Endothelial cell of umbilical vein (primary cell): ENCODE measurements at regions of chr3 and their contacts with region 1.

Region 1: GRCh38 chr3:141575879-141576743 is 89.3 kb downstream of the RASA2 start:
- DNase-seq: peak; percentile 43
- H3K4me3 ChIP-seq: no peak overlapping the region
- H3K27ac ChIP-seq: no peak overlapping the region
- H3K4me1 ChIP-seq: no peaks in the 10 kb centered on the region
- H3K27me3 ChIP-seq: no peaks in the 10 kb centered on the region
- CTCF ChIP-seq: peak; percentile 21
- POLR2A ChIP-seq: no peak

Region 2: DNA sequence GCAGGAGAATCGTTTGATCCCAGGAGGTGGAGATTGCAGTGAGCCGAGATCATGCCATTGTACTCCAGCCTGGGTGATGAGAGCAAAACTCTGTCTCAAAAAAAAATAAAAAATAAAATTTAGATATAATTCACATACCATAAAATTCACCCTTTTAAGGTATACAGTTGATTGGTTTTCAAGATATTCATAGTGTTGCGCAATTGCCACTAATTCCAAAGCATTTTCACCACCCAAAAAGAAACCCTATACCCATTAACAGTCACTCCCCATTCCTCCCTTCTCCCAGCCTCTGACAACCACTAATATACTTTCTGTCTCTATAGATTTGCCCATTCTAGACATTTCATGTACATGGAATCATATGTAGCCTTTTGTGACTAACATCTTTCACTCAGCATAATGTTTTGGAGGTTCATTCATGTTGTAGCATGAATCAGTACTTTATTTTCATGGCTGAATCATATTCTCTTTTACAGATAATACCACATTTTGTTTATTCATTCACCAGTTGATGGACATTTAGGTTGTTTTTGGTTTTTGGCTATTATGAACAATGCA is 27.4 kb after region 1 on chr3:
- CTCF ChIA-PET with region 1: no interaction called
- POLR2A ChIA-PET with region 1: no interaction called
- dilution Hi-C with region 1: no loop called
- intact Hi-C with region 1: no loop called
- DNase-seq: no peak
- H3K4me3 ChIP-seq: no peak overlapping the region
- H3K27ac ChIP-seq: no peak overlapping the region
- H3K4me1 ChIP-seq: no peaks in the 10 kb centered on the region
- H3K27me3 ChIP-seq: no peaks in the 10 kb centered on the region
- CTCF ChIP-seq: no peak
- POLR2A ChIP-seq: no peak

Region 3: DNA sequence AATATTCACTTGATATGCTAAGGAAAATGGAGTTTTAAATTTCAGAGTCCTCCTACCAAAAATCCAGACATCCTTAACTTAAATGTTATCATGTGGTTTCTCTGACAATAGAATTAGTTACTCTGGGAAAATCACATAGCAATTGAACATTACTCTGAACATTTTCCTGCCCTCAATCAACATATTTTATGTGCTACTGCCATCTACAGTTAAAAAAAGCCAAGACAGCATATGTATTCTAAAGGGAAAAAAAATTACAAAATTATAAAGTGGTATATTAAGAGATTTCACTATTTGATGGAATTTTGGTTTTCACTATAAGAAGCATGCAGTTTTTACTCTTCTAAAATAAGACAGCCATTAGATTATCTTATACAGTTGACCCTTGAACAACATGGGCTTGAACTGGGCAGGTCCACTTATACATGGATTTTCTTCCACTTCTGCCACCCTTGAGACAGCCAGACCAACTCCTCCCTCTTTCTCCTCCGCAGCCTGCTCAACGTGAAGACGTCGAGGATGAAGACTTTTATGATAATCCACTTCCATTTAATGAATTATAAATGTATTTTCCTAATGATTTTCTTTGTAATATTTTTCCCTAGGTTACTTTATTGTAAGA is 422.7 kb after region 1 on chr3:
- CTCF ChIA-PET with region 1: interaction called, 3 read pairs
- POLR2A ChIA-PET with region 1: no interaction called
- dilution Hi-C with region 1: no loop called
- intact Hi-C with region 1: loop called (anchors 1 kb)
- DNase-seq: peak; percentile 19
- H3K4me3 ChIP-seq: no peak overlapping the region
- H3K27ac ChIP-seq: no peak overlapping the region
- H3K4me1 ChIP-seq: no peaks in the 10 kb centered on the region
- H3K27me3 ChIP-seq: no peaks in the 10 kb centered on the region
- CTCF ChIP-seq: peak in 1 of 2 donors; percentile 8
- POLR2A ChIP-seq: no peak